Activated CD4-positive, alpha-beta T cell treated with anti-CD3 and anti-CD28 coated beads for 36 hours (primary cell): ENCODE measurements at regions of chr1 and their contacts with region 1.

Region 1: DNA sequence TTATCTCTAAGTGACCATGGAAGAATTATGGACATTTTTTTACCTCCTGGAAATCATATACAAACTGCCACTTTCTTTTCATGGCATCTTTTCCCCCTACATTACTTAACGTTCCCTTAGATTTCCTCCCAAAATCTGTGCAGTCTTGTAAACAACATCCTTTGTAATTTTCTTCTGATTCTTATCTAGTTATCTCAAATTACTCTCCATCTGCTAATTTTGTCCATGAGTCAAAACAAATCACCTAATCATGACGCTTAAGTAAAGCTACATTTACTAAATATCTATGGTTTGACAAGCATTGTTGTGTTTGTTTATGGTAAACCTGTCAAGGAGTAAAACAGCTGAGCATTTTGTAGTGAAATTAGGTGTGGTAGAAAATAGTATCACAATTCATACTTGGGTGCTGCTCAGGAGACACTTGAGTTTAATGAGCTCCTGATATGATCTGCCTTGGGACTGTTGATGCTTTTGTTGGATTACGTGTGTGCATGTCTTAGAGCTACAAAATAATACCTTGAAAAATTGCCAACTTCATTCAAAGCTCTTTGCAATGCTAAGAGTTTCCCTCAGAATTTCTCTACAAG is 11.6 kb downstream of the TIPRL start:
- DNase-seq: no peak
- ATAC-seq: no peak
- H3K4me3 Mint-ChIP-seq: no peak overlapping the region
- H3K27ac Mint-ChIP-seq: no peak overlapping the region
- H3K4me1 Mint-ChIP-seq: no peaks in the 10 kb centered on the region
- H3K27me3 Mint-ChIP-seq: no peaks in the 10 kb centered on the region

Region 2: DNA sequence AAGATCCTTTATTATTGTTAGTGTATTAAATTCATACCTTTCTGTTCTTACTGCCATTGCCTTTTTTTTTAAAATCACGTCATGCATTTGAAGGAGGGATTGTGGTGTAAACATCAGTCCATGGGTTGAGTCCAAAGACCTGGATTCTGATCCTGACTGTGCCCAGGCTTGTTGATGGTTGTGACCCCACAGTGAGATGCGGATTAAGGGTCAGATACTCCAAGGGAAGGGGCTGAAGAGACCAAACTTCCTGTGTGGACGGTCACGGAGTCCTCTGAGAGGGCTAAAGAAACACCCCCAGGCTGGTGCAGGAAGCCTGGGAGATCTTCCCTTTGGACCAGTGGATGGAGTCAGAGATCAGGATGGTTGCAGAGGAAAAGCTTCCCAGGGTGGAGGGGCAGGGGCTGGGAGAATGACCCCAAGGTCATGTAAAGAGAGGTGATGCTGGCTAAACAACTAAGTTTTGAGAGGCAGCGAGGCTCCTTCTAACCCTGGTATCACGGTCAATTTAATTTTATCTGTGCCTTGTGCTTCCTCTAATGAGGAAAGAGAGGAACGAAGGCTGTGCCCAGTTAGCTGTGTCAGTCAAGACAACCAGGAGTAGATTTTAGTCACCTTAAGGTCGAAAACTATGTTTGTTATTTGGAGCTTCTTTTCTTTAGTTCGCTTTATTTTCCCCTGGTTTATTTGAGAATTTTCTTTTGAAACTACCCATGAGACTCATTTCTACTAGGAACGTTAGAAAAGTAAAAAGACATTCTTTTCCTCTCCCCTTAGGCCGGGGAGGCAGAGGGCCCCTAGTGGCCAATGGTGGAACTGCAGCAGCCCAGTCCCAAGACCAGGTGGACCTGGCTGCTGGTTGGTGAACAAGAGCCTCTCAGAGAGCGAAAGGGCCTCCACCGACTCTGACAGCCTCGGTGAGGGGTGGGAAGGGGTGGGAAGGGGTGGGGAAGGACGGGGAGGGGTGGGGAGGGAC is 44.9 kb before region 1 on chr1:
- CTCF ChIA-PET with region 1: interaction called, 4 read pairs
- POLR2A ChIA-PET with region 1: no interaction called
- intact Hi-C with region 1: loop called in 1 of 2 experiments (anchors 5 kb)
- DNase-seq: peak; percentile 93
- ATAC-seq: peak; percentile 100
- H3K4me3 Mint-ChIP-seq: no peak overlapping the region
- H3K27ac Mint-ChIP-seq: no peak overlapping the region
- H3K4me1 Mint-ChIP-seq: peaks cover 13% of the 10 kb centered on the region
- H3K27me3 Mint-ChIP-seq: peaks cover 1% of the 10 kb centered on the region